Caco-2 (cell line): ENCODE measurements at regions of chr5 and their contacts with region 1.

Region 1: GRCh38 chr5:174693713-174694385 is 30.5 kb upstream of the MSX2 start:
- DNase-seq: peak; percentile 46 to 67
- H3K4me3 ChIP-seq: no peak overlapping the region
- H3K4me3 Mint-ChIP-seq: peak overlapping the region; percentile 84
- H3K27ac Mint-ChIP-seq: peak overlapping the region; percentile 88
- H3K4me1 ChIP-seq: peaks cover 37% of the 10 kb centered on the region
- H3K4me1 Mint-ChIP-seq: peaks cover 41% of the 10 kb centered on the region
- H3K27me3 ChIP-seq: no peaks in the 10 kb centered on the region
- H3K27me3 Mint-ChIP-seq: no peaks in the 10 kb centered on the region
- CTCF ChIP-seq: no peak

Region 2: GRCh38 chr5:174625591-174626350 is 68.1 kb before region 1 on chr5:
- CTCF ChIA-PET with region 1: interaction called, 5 read pairs
- POLR2A ChIA-PET with region 1: interaction called, 3 read pairs
- intact Hi-C with region 1: loop called (anchors 1 kb)
- DNase-seq: no peak
- H3K4me3 ChIP-seq: no peak overlapping the region
- H3K4me3 Mint-ChIP-seq: no peak overlapping the region
- H3K27ac Mint-ChIP-seq: peak overlapping the region; percentile 41
- H3K4me1 ChIP-seq: peaks cover 51% of the 10 kb centered on the region
- H3K4me1 Mint-ChIP-seq: peaks cover 49% of the 10 kb centered on the region
- H3K27me3 ChIP-seq: no peaks in the 10 kb centered on the region
- H3K27me3 Mint-ChIP-seq: no peaks in the 10 kb centered on the region
- CTCF ChIP-seq: no peak

Region 3: DNA sequence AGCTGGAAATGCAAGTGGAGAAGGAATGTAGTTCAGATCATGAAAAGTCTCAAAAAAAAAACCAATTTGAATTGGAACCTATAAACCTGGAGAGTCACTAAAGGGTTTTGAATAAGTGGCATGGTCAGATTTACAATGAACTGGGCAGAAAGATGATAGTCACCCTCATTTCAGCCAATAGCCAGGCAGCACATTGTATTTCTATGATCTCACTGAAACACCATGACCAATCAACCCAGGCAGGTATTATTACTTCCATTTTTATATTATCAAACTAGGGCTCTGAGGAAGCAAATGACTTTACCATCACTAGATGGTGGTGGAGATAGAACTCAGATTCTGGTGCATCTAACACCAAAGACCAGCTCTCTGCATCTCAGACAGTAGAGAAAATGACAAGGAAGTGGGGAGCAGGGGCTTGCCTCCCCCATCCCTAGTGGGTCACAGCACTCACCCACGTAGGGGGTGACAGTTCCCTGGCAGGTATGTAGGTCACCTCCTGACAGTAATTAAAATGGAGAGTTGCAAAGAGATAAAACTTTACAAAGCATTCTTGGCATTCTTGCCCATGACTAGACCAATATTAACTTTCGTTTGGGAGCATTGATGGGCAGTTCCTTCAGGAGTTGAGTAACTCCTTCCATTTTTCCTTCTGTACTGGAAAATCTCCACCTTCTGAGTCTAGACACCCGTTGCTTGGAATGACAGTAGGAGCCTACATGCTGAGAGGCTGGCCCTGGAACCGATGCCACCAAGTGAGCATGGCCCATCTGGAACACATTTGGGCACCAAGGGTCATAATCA is 51.2 kb before region 1 on chr5:
- CTCF ChIA-PET with region 1: no interaction called
- POLR2A ChIA-PET with region 1: no interaction called
- intact Hi-C with region 1: loop called (anchors 2 kb)
- DNase-seq: peak; percentile 72 to 73
- H3K4me3 ChIP-seq: no peak overlapping the region
- H3K4me3 Mint-ChIP-seq: peak overlapping the region; percentile 25
- H3K27ac Mint-ChIP-seq: peak overlapping the region; percentile 61
- H3K4me1 ChIP-seq: peaks cover 40% of the 10 kb centered on the region
- H3K4me1 Mint-ChIP-seq: peaks cover 48% of the 10 kb centered on the region
- H3K27me3 ChIP-seq: no peaks in the 10 kb centered on the region
- H3K27me3 Mint-ChIP-seq: no peaks in the 10 kb centered on the region
- CTCF ChIP-seq: no peak